Activated CD4-positive, alpha-beta memory T cell treated with anti-CD3 and anti-CD28 coated beads for 36 hours (primary cell): ENCODE measurements at regions of chr5 and their contacts with region 1.

Region 1: GRCh38 chr5:98940581-98940980 is 11.8 kb upstream of the CHD1 start:
- DNase-seq: no peak
- H3K4me3 Mint-ChIP-seq: no peak overlapping the region
- H3K27ac Mint-ChIP-seq: peak overlapping the region; percentile 20
- H3K4me1 Mint-ChIP-seq: peaks cover 51% of the 10 kb centered on the region
- H3K27me3 Mint-ChIP-seq: no peaks in the 10 kb centered on the region

Region 2: GRCh38 chr5:99004960-99005359 is 64.4 kb after region 1 on chr5:
- CTCF ChIA-PET with region 1: no interaction called
- POLR2A ChIA-PET with region 1: no interaction called
- intact Hi-C with region 1: loop called (anchors 2 kb)
- DNase-seq: peak; percentile 35
- H3K4me3 Mint-ChIP-seq: no peak overlapping the region
- H3K27ac Mint-ChIP-seq: no peak overlapping the region
- H3K4me1 Mint-ChIP-seq: peaks cover 16% of the 10 kb centered on the region
- H3K27me3 Mint-ChIP-seq: no peaks in the 10 kb centered on the region